ENCODE measurements at regions of chr21 and their contacts with region 1.

Region 1: DNA sequence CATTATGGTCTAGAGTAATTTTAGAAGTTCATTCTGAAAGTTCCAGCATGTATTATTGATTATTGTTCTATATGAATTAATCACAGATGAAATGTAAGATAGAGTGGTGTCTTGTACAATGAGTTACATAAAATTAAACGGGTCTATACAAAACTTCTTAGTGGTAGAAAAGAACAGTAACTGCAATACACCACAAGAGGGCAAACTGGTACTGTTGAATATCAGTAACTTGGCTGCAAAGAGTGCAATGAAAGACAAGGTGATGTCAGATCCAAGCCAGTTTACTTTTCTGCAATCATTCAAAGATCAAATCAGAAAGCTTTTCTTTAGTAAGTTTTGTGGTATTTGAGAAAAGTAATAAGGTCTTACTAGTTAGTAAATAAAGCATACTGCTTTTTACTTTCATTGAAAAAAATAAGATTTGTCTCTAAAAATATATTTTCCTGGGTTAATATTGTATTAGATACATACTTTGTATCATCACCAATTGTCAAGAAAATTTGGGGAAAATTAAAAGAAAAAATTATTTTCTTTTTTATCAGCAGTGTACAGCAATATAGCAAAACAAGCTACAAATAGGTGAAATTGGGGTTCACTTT is 66.4 kb upstream of the BTG3 start:
- DNase-seq: no peak
- ATAC-seq: peak; percentile 88 to 92
- H3K4me3 ChIP-seq: no peak overlapping the region
- H3K27ac ChIP-seq: no peak overlapping the region
- H3K4me1 ChIP-seq: no peaks in the 10 kb centered on the region
- H3K27me3 ChIP-seq: no peaks in the 10 kb centered on the region
- CTCF ChIP-seq: peak; percentile 78

Region 2: GRCh38 chr21:17903029-17903806 is 224.1 kb after region 1 on chr21:
- intact Hi-C with region 1: loop called (anchors 5 kb)
- DNase-seq: no peak
- ATAC-seq: peak in 1 of 2 donors; percentile 60
- H3K4me3 ChIP-seq: no peak overlapping the region
- H3K27ac ChIP-seq: no peak overlapping the region
- H3K4me1 ChIP-seq: peaks cover 5% of the 10 kb centered on the region
- H3K27me3 ChIP-seq: no peaks in the 10 kb centered on the region
- CTCF ChIP-seq: peak; percentile 22

Region 3: GRCh38 chr21:17925000-17925610 is 246.0 kb after region 1 on chr21:
- intact Hi-C with region 1: loop called (anchors 10 kb)
- DNase-seq: no peak
- ATAC-seq: peak; percentile 93 to 95
- H3K4me3 ChIP-seq: no peak overlapping the region
- H3K27ac ChIP-seq: no peak overlapping the region
- H3K4me1 ChIP-seq: no peaks in the 10 kb centered on the region
- H3K27me3 ChIP-seq: no peaks in the 10 kb centered on the region
- CTCF ChIP-seq: peak; percentile 88